Common myeloid progenitor, CD34-positive (primary cell): ENCODE measurements at regions of chr5 and their contacts with region 1.

Region 1: DNA sequence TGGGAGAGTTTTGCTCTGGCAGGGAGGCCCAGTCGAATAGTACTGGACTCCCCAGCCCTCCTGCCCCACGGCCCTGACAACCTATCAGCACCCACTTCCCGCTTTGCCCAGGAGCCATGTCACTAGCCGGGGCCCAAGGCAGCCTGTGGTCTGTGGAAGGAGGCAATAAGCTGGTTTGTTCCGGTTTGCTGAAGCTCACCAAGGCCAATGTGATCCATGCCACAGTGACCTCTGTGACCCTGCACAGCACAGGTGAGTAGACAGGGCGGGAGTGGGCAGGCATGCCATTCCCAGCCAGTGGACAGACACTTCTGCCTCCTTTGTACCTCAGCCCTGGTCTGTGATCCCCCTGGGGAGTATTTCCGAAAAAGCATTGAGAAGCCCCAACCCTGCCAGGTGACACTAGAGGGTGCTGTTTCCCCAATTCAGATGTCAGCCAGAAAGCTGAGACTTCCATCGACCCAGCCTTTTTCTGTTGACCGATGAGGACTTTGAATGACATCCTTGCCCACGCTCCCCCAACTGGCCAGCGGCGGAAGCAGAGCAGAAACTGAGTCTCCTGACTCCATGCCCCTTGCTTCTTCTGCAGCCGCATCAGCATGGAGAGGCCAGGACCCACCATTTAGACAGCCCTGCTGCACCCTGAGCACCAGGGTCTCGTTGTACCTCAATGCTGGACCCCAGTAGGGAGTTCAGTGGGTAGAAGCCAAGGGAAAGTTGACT is 9.6 kb downstream of the PCYOX1L start:
- DNase-seq: peak; percentile 51 to 71 (median 59)
- H3K4me3 ChIP-seq: no peak overlapping the region
- H3K27ac ChIP-seq: no peak overlapping the region
- H3K4me1 ChIP-seq: peaks cover 0 to 19% (median 0%) of the 10 kb centered on the region in 4 experiments
- H3K27me3 ChIP-seq: no peaks in the 10 kb centered on the region

Region 2: GRCh38 chr5:149310947-149311658 is 56.3 kb before region 1 on chr5:
- CTCF ChIA-PET with region 1: interaction called, 57 read pairs
- POLR2A ChIA-PET with region 1: no interaction called
- DNase-seq: peak in 2 of 3 donors; percentile 75 to 79
- H3K4me3 ChIP-seq: no peak overlapping the region
- H3K27ac ChIP-seq: no peak overlapping the region
- H3K4me1 ChIP-seq: peaks cover 0 to 10% (median 7%) of the 10 kb centered on the region in 4 experiments
- H3K27me3 ChIP-seq: no peaks in the 10 kb centered on the region

Region 3: GRCh38 chr5:149333711-149334443 is 33.5 kb before region 1 on chr5:
- CTCF ChIA-PET with region 1: interaction called, 17 read pairs
- POLR2A ChIA-PET with region 1: no interaction called
- DNase-seq: no peak
- H3K4me3 ChIP-seq: no peak overlapping the region
- H3K27ac ChIP-seq: no peak overlapping the region
- H3K4me1 ChIP-seq: no peaks in the 10 kb centered on the region
- H3K27me3 ChIP-seq: no peaks in the 10 kb centered on the region

Region 4: GRCh38 chr5:149389552-149390495 is 22.4 kb after region 1 on chr5:
- CTCF ChIA-PET with region 1: interaction called, 209 read pairs
- POLR2A ChIA-PET with region 1: no interaction called
- DNase-seq: no peak
- H3K4me3 ChIP-seq: no peak overlapping the region
- H3K27ac ChIP-seq: no peak overlapping the region
- H3K4me1 ChIP-seq: peaks cover 0 to 8% (median 6%) of the 10 kb centered on the region in 4 experiments
- H3K27me3 ChIP-seq: no peaks in the 10 kb centered on the region

Region 5: DNA sequence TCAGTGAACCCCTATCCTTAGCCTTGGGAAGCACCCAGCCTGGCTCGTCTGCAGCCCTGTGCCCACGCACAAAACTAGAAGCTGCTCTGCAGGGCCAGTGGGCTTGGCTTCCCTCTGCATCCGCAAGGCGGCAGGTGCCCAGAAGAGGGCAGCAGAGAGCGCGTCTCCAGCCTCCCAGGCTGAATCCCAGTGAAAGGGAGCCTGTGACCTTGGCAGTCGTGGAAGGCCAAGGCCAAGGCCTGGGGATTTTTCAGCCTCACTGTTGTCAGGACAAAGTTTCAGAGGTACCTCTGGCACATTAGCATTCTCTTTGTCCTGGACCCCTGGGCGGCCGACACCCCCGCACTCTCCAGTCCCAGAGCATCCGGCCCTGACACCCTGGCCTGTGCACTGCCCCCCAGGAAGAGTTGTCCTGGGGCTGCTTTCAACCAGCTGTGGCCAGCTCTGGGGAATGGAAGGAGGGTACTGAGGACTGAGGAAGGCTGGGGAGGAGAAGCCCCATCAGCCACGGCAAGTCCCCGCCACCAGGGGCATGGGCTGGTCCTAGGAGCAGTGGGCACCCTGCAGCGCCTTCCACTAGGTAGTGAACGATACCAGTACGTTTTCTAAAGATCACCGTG is 75.3 kb after region 1 on chr5:
- CTCF ChIA-PET with region 1: interaction called, 16 read pairs
- POLR2A ChIA-PET with region 1: no interaction called
- DNase-seq: peak; percentile 44 to 66 (median 49)
- H3K4me3 ChIP-seq: no peak overlapping the region
- H3K27ac ChIP-seq: no peak overlapping the region
- H3K4me1 ChIP-seq: peaks cover 0 to 25% (median 13%) of the 10 kb centered on the region in 4 experiments
- H3K27me3 ChIP-seq: no peaks in the 10 kb centered on the region

Region 6: DNA sequence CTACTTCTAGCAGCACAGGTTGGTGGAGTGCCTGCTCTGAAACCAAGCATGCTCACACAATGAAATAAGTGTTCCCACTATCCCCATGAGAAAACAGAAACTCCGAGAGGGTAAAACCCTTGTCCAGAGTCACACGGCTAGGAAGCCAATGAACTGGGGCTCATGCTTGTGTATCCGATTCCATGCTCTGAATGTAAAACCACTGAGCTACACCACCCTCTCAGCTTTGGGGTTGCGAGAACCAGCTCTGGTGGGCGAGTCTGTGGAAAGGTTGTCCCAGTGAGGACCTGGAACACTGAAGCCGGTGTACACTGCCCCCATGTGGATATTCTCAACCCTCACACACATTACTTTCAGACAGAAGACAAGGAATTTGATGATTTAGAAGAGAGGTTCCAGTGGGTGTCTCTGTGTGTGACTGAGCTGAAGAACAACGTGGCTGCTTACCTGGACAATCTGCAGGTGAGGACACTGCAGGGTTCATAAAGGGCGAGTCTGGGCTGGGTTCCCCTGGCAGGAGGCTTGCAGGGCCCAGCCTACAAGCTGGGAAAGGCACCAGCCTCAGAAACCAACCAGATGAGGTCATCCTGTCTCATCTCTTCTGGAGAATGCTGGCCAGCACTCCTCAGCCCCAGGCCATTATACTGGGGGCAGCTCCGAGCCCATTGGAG is 251.3 kb after region 1 on chr5:
- CTCF ChIA-PET with region 1: interaction called, 10 read pairs
- POLR2A ChIA-PET with region 1: no interaction called
- DNase-seq: peak; percentile 43 to 67 (median 61)
- H3K4me3 ChIP-seq: no peak overlapping the region
- H3K27ac ChIP-seq: no peak overlapping the region
- H3K4me1 ChIP-seq: no peaks in the 10 kb centered on the region
- H3K27me3 ChIP-seq: no peaks in the 10 kb centered on the region

Region 7: GRCh38 chr5:150394131-150394530 is 1026.7 kb after region 1 on chr5:
- CTCF ChIA-PET with region 1: no interaction called
- POLR2A ChIA-PET with region 1: no interaction called
- DNase-seq: peak in 2 of 3 donors; percentile 68 to 70
- H3K4me3 ChIP-seq: no peak overlapping the region
- H3K27ac ChIP-seq: no peak overlapping the region
- H3K4me1 ChIP-seq: no peaks in the 10 kb centered on the region
- H3K27me3 ChIP-seq: no peaks in the 10 kb centered on the region